SK-N-SH (cell line): ENCODE measurements at regions of chr6 and their contacts with region 1.

Region 1: GRCh38 chr6:154675602-154676088 is 57.6 kb upstream of the SCAF8 start:
- DNase-seq: peak; percentile 86
- H3K4me3 ChIP-seq: peak overlapping the region in 1 of 2 experiments; percentile 49; a peak in 1 of 4 replicates
- H3K27ac ChIP-seq: no peak overlapping the region
- H3K4me1 ChIP-seq: no peaks in the 10 kb centered on the region
- H3K27me3 ChIP-seq: no peaks in the 10 kb centered on the region
- CTCF ChIP-seq: peak; percentile 100
- EP300 ChIP-seq: peak in 1 of 2 experiments; percentile 52; a peak in 1 of 4 replicates
- RAD21 ChIP-seq: peak; percentile 100

Region 2: GRCh38 chr6:154156135-154156896 is 519.3 kb before region 1 on chr6:
- CTCF ChIA-PET with region 1: interaction called, 13 read pairs
- POLR2A ChIA-PET with region 1: no interaction called
- DNase-seq: peak; percentile 25
- H3K4me3 ChIP-seq: no peak overlapping the region
- H3K27ac ChIP-seq: no peak overlapping the region
- H3K4me1 ChIP-seq: no peaks in the 10 kb centered on the region; a peak in 1 of 4 replicates
- H3K27me3 ChIP-seq: no peaks in the 10 kb centered on the region
- CTCF ChIP-seq: peak; percentile 62
- EP300 ChIP-seq: no peak
- RAD21 ChIP-seq: peak; percentile 67

Region 3: DNA sequence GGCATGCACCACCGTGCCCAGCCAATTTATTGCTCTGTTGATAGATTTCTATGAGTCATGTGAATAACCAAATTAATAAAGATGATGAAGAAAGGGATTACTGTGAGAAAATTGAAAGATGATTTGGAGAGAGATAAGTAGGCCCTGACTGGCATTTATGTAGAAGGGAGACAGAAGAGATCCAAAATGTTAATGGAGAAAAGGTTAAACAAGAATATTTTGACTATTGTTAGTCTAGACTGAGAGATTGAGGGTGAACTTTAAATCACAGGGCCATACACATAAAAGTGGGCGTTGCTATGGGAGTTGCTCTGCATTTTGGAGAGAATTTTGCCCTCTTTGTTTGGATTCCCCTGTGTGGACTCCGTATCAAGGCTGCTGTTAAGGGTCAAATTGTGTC is 11.4 kb before region 1 on chr6:
- CTCF ChIA-PET with region 1: interaction called, 18 read pairs
- POLR2A ChIA-PET with region 1: no interaction called
- DNase-seq: no peak
- H3K4me3 ChIP-seq: no peak overlapping the region
- H3K27ac ChIP-seq: no peak overlapping the region
- H3K4me1 ChIP-seq: no peaks in the 10 kb centered on the region
- H3K27me3 ChIP-seq: no peaks in the 10 kb centered on the region
- CTCF ChIP-seq: no peak
- EP300 ChIP-seq: no peak
- RAD21 ChIP-seq: no peak

Region 4: GRCh38 chr6:154745243-154745642 is 69.6 kb after region 1 on chr6:
- CTCF ChIA-PET with region 1: interaction called, 13 read pairs
- POLR2A ChIA-PET with region 1: no interaction called
- DNase-seq: no peak
- H3K4me3 ChIP-seq: no peak overlapping the region
- H3K27ac ChIP-seq: no peak overlapping the region
- H3K4me1 ChIP-seq: no peaks in the 10 kb centered on the region; a peak in 1 of 4 replicates
- H3K27me3 ChIP-seq: no peaks in the 10 kb centered on the region
- CTCF ChIP-seq: no peak
- EP300 ChIP-seq: no peak
- RAD21 ChIP-seq: no peak

Region 5: DNA sequence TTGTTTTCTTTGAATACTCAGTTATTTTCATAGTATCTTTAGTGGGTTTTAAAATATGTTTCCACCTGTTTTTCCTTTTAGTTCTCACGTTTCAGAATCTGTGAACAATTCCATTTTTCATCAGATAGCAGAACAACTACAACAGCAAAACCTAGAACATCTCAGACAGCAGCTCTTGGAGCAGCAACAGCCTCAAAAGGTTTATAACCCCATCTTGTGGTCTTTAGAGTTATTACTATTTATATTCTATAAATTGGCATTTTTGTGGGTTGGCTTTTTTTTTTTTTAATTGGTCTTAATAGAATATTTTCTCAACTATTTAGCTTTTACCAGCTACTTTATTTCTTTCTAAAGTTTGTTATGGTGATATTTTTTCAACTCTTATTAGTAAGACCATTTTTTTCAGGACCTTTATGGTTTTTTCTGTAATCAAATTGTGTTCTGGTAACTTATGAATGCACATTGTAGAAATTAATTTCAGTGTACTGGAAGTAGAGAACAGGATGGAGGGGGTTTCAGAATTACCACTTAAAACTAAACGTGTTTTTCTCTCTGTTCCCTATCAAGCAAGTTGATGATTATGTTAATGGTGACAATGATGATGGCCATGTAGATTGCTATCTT is 129.8 kb after region 1 on chr6:
- CTCF ChIA-PET with region 1: interaction called, 135 read pairs
- POLR2A ChIA-PET with region 1: no interaction called
- DNase-seq: peak; percentile 47
- H3K4me3 ChIP-seq: no peak overlapping the region
- H3K27ac ChIP-seq: peak overlapping the region in 1 of 2 experiments; percentile 28; a peak in 2 of 4 replicates
- H3K4me1 ChIP-seq: peaks cover 3 to 5% of the 10 kb centered on the region in 2 experiments; a peak in 1 of 4 replicates
- H3K27me3 ChIP-seq: no peaks in the 10 kb centered on the region
- CTCF ChIP-seq: peak; percentile 65
- EP300 ChIP-seq: no peak
- RAD21 ChIP-seq: peak; percentile 86

Region 6: GRCh38 chr6:154868143-154868594 is 192.5 kb after region 1 on chr6:
- CTCF ChIA-PET with region 1: interaction called, 21 read pairs
- POLR2A ChIA-PET with region 1: no interaction called
- DNase-seq: peak; percentile 46
- H3K4me3 ChIP-seq: no peak overlapping the region
- H3K27ac ChIP-seq: peak overlapping the region in 1 of 2 experiments; percentile 38; a peak in 1 of 4 replicates
- H3K4me1 ChIP-seq: peaks cover 0 to 4% of the 10 kb centered on the region in 2 experiments; a peak in 1 of 4 replicates
- H3K27me3 ChIP-seq: no peaks in the 10 kb centered on the region
- CTCF ChIP-seq: peak; percentile 84
- EP300 ChIP-seq: no peak
- RAD21 ChIP-seq: peak; percentile 87

Region 7: DNA sequence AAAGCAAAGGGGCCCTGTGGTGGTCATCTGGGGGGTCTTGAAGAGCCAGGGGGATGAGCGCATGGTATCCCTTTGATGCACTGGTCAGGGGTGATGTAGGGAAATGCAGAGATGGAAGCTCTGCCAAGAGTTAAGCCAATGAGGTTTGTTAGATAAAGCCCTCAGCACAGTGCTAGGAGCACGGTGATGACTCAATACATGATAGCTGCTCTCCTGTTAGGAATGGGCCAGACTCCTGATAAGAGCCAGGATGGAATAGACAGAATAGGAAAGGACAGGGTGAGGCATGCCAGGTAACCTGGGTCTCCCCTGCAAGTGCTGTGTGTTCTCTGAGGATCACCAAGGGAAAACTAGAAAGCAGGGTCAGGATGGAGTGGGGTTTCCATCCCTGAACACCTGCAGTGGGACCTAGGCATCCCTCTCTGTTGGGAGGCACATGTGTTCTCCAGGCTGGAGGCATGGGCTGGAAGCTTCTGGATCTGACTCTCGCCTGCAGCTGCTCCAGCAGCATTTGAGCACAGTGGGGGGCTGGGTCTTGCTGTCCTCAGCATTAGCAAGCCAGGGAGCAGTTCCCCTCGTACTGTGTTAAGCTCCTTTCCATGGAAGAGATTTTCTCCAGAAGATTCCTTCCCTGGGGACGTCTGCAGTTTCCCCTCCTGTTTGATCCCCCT is 247.7 kb after region 1 on chr6:
- CTCF ChIA-PET with region 1: interaction called, 19 read pairs
- POLR2A ChIA-PET with region 1: no interaction called
- DNase-seq: no peak
- H3K4me3 ChIP-seq: no peak overlapping the region
- H3K27ac ChIP-seq: no peak overlapping the region
- H3K4me1 ChIP-seq: peaks cover 0 to 21% of the 10 kb centered on the region in 2 experiments; a peak in 2 of 4 replicates
- H3K27me3 ChIP-seq: no peaks in the 10 kb centered on the region
- CTCF ChIP-seq: no peak
- EP300 ChIP-seq: no peak
- RAD21 ChIP-seq: no peak